Activated CD4-positive, alpha-beta memory T cell treated with anti-CD3 and anti-CD28 coated beads, Interleukin-2, amount 10 ng/mL, durations not matched to agents 7 days and 5 days (primary cell): ENCODE measurements at regions of chr5 and their contacts with region 1.

Region 1: GRCh38 chr5:96807075-96807654 is 580 bp downstream of the ERAP1 start:
- DNase-seq: peak; percentile 53
- H3K4me3 Mint-ChIP-seq: peak overlapping the region; percentile 95
- H3K27ac Mint-ChIP-seq: peak overlapping the region; percentile 92
- H3K4me1 Mint-ChIP-seq: peaks cover 62% of the 10 kb centered on the region
- H3K27me3 Mint-ChIP-seq: no peaks in the 10 kb centered on the region

Region 2: GRCh38 chr5:96662725-96663513 is 144.2 kb before region 1 on chr5:
- CTCF ChIA-PET with region 1: no interaction called
- POLR2A ChIA-PET with region 1: interaction called, 34 read pairs
- DNase-seq: peak; percentile 91
- H3K4me3 Mint-ChIP-seq: peak overlapping the region; percentile 99
- H3K27ac Mint-ChIP-seq: peak overlapping the region; percentile 99
- H3K4me1 Mint-ChIP-seq: peaks cover 46% of the 10 kb centered on the region
- H3K27me3 Mint-ChIP-seq: peaks cover 19% of the 10 kb centered on the region

Region 3: DNA sequence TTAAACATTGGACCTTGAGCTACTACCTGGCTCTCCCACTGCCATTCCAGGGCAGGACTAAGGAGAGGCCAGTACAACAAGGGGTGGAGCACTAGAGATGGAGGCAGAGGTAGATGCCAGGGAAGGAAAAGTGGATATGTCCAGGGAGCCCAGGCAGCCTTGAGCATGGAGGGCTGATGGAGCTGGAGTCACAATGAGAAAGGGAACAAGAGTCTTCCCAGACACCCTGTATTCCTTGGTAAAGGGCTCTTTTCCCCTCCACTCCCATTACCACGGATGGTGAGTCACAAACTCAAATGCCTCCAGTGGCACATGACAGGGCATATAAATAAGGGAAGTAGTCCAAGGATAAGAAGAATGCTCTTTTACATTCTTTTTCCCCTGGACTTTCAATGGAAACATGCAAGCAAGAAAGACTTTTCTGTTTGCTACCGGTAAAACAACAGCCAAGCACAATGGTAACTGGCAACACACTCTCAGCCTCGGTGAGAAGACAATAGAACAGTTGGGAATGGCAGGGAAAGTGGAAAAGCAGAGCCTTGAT is 16.1 kb before region 1 on chr5:
- CTCF ChIA-PET with region 1: interaction called, 4 read pairs
- POLR2A ChIA-PET with region 1: interaction called, 16 read pairs
- DNase-seq: no peak
- H3K4me3 Mint-ChIP-seq: no peak overlapping the region
- H3K27ac Mint-ChIP-seq: no peak overlapping the region
- H3K4me1 Mint-ChIP-seq: peaks cover 16% of the 10 kb centered on the region
- H3K27me3 Mint-ChIP-seq: no peaks in the 10 kb centered on the region

Region 4: DNA sequence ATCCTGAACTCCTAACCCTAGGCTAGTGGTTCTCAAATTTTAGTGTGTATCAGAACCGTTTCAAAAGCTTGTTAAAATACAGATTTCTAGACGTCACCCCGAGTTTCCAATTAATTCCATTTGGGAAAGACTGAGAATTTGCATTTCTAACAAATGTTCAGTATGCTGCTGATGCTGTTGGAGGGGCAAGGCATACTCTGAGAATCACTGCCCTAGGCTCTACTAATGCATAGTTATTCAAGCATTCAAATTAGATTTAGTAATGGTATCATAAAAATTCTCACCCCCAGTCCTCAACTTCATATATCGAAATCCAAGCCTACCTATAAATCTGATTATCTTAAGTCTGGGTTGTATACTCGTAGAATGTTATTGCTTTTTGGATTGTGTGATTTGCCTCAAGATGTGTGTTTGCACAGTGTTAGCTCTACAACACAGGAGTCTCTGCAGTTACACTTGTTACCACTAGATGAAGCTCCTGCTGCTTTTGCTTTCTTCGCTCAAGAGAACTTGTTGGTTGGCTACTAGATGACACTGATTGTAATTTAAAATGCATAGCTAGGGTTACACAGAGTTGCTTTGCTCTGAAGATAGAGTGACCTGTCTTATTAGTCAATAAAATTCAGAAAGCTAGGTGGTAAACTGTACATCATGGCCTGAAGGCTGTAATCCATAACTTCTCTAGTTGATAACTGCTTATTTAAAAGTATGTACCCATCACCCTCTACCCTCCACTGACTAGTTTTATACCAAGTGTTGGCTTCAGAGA is 61.6 kb after region 1 on chr5:
- CTCF ChIA-PET with region 1: interaction called, 43 read pairs
- POLR2A ChIA-PET with region 1: interaction called, 93 read pairs
- DNase-seq: no peak
- H3K4me3 Mint-ChIP-seq: no peak overlapping the region
- H3K27ac Mint-ChIP-seq: peak overlapping the region; percentile 82
- H3K4me1 Mint-ChIP-seq: peaks cover 54% of the 10 kb centered on the region
- H3K27me3 Mint-ChIP-seq: no peaks in the 10 kb centered on the region

Region 5: GRCh38 chr5:96896806-96897205 is 89.6 kb after region 1 on chr5:
- CTCF ChIA-PET with region 1: interaction called, 7 read pairs
- POLR2A ChIA-PET with region 1: interaction called, 23 read pairs
- DNase-seq: no peak
- H3K4me3 Mint-ChIP-seq: peak overlapping the region; percentile 67
- H3K27ac Mint-ChIP-seq: peak overlapping the region; percentile 87
- H3K4me1 Mint-ChIP-seq: peaks cover 47% of the 10 kb centered on the region
- H3K27me3 Mint-ChIP-seq: no peaks in the 10 kb centered on the region

Region 6: DNA sequence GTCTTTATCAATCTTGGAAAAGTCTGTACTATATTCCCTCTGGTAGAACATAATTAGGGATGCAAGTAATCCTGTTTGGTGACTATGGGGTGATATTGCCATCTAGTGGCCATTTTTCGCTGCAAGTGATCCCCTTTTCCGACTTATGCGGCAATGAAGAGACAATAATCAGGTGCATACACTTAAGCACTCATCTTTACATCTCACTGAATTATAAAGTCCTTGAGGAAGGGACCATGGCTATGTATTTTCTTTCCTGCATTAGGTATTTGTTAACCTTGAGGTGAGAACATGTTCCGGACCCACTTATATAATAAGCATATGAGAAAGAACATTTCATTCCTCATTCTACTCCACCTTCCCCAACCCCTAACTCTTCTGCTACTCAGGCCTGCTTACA is 354.9 kb after region 1 on chr5:
- CTCF ChIA-PET with region 1: interaction called, 12 read pairs
- POLR2A ChIA-PET with region 1: interaction called, 7 read pairs
- DNase-seq: peak; percentile 56
- H3K4me3 Mint-ChIP-seq: no peak overlapping the region
- H3K27ac Mint-ChIP-seq: no peak overlapping the region
- H3K4me1 Mint-ChIP-seq: peaks cover 19% of the 10 kb centered on the region
- H3K27me3 Mint-ChIP-seq: no peaks in the 10 kb centered on the region